Thyroid gland (tissue), 4 donors: ENCODE measurements at regions of chr1 and their contacts with region 1.

Region 1: DNA sequence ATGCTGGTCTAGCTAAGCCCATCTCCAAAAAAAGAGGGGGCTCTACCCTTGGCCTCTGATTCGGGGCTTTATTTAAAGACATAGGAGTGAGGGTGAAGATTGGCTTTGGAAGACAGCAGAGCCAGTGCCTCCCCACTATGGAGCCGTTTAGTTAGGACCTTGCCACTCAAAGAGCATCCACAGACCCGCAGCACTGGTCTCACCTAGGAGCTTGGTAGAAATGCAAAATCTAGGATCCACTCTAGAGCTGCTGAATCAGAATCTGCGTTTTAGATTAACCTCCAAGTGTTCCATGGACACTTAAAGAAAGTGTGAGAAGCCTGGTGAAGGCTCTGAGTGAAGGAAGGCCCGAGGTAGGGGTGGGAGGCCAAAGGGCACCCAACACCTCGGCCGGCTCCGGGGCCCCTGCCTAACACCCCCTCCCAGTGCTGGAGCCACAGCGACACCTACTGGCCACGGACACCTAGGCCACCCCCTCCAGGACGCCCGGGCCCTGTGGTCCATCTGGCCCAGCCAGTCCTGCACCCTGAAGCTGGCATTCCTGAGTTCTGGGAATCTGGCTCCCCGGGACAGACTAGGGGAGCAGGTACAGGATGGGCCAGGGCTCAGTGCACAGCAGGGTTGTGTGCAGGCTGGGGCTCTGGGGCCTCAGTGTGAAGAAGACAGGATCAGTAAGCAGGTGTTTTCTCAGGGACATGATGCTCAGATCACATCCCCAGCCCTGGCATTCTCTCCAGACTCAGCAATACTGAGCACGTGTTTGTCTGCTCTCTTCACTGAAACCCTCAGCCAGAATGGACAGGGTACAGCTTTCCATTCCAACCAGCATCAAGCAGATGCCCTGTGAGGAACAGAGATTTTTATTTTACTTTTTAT is 79.2 kb downstream of the TMEM53 start:
- DNase-seq: peak; percentile 69 to 78
- H3K4me3 ChIP-seq: no peak overlapping the region
- H3K27ac ChIP-seq: no peak overlapping the region
- H3K4me1 ChIP-seq: no peaks in the 10 kb centered on the region
- H3K27me3 ChIP-seq: no peaks in the 10 kb centered on the region
- CTCF ChIP-seq: peak; percentile 71 to 97 (median 86)
- POLR2A ChIP-seq: no peak

Region 2: GRCh38 chr1:44213222-44214112 is 381.6 kb before region 1 on chr1 and contains the start of gene DMAP1:
- intact Hi-C with region 1: loop called (anchors 10 kb)
- DNase-seq: peak; percentile 79 to 82
- H3K4me3 ChIP-seq: peak within 1 kb of the TSS; percentile 9 to 86 (median 57)
- H3K27ac ChIP-seq: peak within 1 kb of the TSS; percentile 19 to 83 (median 40)
- H3K4me1 ChIP-seq: peaks cover 11 to 14% of the 10 kb centered on the region in 2 donors
- H3K27me3 ChIP-seq: no peaks in the 10 kb centered on the region
- CTCF ChIP-seq: peak in 3 of 6 experiments; percentile 16 to 32 (median 28)
- POLR2A ChIP-seq: peak in 1 of 2 donors; percentile 46
- total RNA-seq, gene DMAP1: 43.9 to 68.8 (median 48.3) TPM

Region 3: DNA sequence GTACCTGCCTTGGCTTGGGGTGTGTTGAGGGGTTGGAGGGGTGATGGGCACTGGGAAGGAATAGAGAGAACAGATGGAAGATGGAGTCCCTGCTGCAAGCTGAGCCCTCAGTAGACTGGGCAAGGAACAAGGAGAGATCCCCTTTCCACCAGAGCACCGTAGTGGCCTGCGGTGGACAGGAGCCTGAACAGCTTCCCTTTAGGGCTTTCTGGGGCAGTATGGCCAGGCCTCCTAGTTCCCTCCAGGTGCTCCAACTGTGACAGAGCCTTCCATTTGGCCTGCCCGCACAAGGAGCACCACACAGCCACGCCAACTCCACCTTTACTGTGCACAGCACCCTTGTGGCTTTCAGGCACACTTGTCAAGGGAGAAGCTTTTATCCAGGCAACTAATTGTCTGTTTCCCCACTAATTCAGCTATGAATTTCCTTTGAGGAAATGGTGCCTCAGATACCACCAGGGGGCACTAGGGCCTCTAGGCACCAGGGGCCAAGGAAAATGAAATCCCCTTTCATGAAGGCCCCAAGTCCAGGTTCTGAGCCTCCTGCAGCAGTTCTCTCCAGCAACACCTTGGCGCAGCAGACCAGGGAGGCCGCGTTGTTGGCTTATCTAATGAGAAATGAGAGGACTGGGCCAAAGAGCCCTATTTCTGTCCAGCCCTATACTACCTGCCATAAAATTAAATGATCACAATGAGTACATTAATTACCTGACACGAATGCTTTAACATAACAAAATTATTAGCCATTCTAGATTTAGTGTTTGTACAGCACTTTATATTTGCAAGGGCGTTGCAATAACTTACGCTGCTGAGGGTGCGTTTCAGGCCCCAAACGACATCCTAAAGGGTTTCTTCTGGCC is 217.0 kb before region 1 on chr1:
- intact Hi-C with region 1: loop called (anchors 2 kb)
- DNase-seq: peak; percentile 56 to 65
- H3K4me3 ChIP-seq: no peak overlapping the region
- H3K27ac ChIP-seq: no peak overlapping the region
- H3K4me1 ChIP-seq: no peaks in the 10 kb centered on the region
- H3K27me3 ChIP-seq: no peaks in the 10 kb centered on the region
- CTCF ChIP-seq: peak; percentile 27 to 73 (median 59)
- POLR2A ChIP-seq: no peak